ENCODE measurements at regions of chr2 and their contacts with region 1.

Region 1: GRCh38 chr2:64914735-64915509 is 74.3 kb upstream of the SLC1A4 start:
- DNase-seq: peak; percentile 71 to 83
- H3K4me3 ChIP-seq: no peak overlapping the region
- H3K27ac ChIP-seq: peak overlapping the region; percentile 72 to 79
- H3K4me1 ChIP-seq: peaks cover 0 to 10% of the 10 kb centered on the region in 2 donors
- H3K27me3 ChIP-seq: no peaks in the 10 kb centered on the region
- CTCF ChIP-seq: no peak
- POLR2A ChIP-seq: no peak

Region 2: DNA sequence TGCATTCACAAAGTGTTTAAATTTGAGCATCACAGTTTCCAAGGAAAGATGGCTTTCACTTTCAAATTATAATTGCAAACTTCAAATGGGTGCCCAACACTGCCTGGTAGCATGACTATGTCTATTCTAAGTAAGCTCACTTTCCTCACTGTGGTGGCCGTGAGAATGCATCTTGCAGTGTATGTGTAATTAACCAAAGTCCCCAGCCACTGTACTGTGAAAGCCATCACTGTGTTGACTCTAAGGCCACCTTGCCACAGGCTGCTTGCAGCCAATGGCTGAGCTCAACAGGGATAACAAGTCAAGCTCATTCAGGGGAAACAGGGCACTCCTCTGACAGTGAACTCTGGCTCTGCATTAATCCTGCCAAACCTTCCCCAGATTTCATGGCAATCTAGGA is 504.3 kb before region 1 on chr2:
- intact Hi-C with region 1: no loop called
- DNase-seq: no peak
- H3K4me3 ChIP-seq: no peak overlapping the region
- H3K27ac ChIP-seq: no peak overlapping the region
- H3K4me1 ChIP-seq: no peaks in the 10 kb centered on the region
- H3K27me3 ChIP-seq: no peaks in the 10 kb centered on the region
- CTCF ChIP-seq: no peak
- POLR2A ChIP-seq: no peak

Region 3: GRCh38 chr2:64792307-64792706 is 122.6 kb before region 1 on chr2:
- intact Hi-C with region 1: no loop called
- DNase-seq: no peak
- H3K4me3 ChIP-seq: no peak overlapping the region
- H3K27ac ChIP-seq: no peak overlapping the region
- H3K4me1 ChIP-seq: no peaks in the 10 kb centered on the region
- H3K27me3 ChIP-seq: no peaks in the 10 kb centered on the region
- CTCF ChIP-seq: peak in 3 of 4 experiments; percentile 10 to 36 (median 18)
- POLR2A ChIP-seq: no peak

Region 4: DNA sequence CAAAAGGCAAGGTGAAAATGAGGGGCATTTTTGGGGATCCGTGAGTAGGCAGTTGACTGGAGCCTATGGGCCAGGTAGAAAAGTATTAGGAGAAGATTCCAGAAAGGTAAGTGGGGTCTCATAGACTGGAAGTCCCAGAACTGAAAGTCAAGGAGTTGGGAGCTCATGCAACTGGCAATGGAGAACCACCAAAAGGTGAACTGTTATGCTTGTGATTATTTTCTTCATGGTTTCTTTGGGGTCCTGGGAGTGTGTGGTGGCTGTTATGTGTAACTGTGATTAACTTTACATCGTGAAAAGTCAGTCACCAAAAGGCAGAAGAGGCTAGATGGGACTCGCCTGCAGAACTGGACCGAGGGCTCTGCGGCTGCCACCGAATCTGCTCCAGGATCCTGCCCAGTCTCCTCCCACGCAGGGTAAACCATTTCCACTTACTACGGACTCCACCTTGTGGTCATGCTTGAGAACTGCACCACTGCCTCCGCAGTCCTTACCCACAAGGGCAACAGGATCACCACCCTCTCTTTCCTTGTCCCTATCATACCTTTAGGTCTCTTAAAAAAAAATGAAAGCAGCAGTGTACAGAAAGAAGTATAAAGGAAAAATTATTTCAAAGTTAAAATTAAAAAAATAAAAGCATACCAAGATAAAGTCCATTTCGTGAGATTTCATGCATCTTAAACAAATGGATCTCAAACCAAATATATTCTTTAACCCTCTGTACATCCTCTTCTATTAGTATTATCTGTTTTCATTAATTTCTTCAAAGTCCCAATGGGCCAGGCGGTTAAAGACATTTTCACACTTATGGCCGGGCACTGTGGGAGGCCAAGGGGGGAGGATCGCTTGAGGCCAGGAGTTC is 125.7 kb after region 1 on chr2:
- intact Hi-C with region 1: loop called (anchors 5 kb)
- DNase-seq: peak; percentile 84 to 90
- H3K4me3 ChIP-seq: no peak overlapping the region
- H3K27ac ChIP-seq: no peak overlapping the region
- H3K4me1 ChIP-seq: no peaks in the 10 kb centered on the region
- H3K27me3 ChIP-seq: no peaks in the 10 kb centered on the region
- CTCF ChIP-seq: peak; percentile 92 to 97 (median 96)
- POLR2A ChIP-seq: no peak

Measured in uterus (tissue), 4 donors.